Activated naive CD4-positive, alpha-beta T cell treated with anti-CD3 and anti-CD28 coated beads for 36 hours (primary cell): ENCODE measurements at regions of chr2 and their contacts with region 1.

Region 1: DNA sequence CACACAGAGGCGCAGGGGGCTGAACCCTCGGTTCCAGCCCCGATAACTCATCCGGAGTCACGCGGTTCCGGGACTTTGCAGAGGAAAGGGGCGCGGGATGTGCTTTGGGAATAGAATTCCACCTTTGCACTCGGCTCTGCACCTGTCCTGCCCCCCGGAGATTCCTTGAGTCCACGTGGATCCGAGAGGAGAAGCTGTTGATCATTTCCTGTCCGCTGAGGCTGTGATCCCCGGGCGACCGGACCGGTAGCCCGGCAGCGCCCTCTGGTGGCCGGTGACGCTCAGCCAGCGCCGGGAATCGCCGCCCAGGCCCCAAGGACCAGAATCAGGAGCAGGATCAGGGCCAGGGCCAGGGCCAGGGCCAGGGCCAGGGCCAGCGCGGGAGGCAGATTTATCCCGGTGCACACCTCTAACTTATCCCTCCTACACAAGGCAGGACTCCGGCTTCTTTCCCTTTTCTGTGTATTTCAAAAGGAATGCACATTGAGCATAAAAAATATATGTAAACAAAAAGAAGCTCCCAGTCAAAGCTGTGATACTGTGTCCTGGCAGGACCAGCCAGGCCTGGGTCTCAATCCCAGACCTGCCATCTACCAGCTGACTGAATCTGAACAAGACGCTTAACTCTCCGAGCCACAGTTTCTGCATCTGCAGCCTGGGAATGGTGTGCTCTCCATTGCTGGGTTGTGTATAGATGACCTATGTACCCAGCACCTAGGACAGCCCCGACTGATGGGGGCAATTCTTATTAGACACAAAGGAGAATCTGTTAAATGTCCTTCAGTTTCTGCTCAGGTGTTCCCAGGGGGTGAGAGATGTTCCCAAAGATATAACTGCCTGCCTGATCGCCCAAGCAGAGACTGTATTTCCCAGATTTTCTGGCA is 8.5 kb upstream of the SPATA3 start:
- DNase-seq: peak; percentile 80
- H3K4me3 Mint-ChIP-seq: peak overlapping the region; percentile 45
- H3K27ac Mint-ChIP-seq: no peak overlapping the region
- H3K4me1 Mint-ChIP-seq: peaks cover 22% of the 10 kb centered on the region
- H3K27me3 Mint-ChIP-seq: peaks cover 21% of the 10 kb centered on the region

Region 2: DNA sequence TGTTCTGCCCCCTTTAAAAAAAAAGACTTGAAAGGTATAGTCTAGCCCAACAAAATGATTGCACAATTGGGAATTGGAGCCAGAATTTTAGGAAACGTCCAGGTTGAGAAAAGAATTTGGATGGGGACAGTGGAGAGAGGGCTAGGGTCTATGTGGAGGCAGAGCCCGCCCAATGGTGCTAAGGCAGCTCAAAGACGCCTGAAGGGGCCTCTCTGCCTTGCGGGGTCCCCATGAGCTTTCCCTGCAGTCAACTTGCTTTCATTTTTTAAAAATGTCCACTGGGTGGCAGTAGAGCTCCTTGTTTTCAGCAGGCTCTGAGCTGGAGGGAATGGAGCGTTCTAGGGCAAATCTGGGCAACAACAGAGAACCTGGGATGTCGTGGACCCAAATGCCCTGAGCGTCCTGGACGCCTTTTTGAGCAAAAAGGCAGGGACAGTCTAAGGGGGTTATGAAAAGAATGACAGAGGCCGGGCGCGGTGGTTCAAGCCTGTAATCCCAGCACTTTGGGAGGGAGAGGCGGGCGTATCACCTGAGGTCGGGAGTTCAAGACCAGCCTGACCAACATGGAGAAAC is 162.9 kb before region 1 on chr2:
- CTCF ChIA-PET with region 1: interaction called, 48 read pairs
- intact Hi-C with region 1: loop called (anchors 1 kb)
- DNase-seq: peak; percentile 59
- H3K4me3 Mint-ChIP-seq: no peak overlapping the region
- H3K27ac Mint-ChIP-seq: no peak overlapping the region
- H3K4me1 Mint-ChIP-seq: peaks cover 5% of the 10 kb centered on the region
- H3K27me3 Mint-ChIP-seq: peaks cover 27% of the 10 kb centered on the region

Region 3: DNA sequence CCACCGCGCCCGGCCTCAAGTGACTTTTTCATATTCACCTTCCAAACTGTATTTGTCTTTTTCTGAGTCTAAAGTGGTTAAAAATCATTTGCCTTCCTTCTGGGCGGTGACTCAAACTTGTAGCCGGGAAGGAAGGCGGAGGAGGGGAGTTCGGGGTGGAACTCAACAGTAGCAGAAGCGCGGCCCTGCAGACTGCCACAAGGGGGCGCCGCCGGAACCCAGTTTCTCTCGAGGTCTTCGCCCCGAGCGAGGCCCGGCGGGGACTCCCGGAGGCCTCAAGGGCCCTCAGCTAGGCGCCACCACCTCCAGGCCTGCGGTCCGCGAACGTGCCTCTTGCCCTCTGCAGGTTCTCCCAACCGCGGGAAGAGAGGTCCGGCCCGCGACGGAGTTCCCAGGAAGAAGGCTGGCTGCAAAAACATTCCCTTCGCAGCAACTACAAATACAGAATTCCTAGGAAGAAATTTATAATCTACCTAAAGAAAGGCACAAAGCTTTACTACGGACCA is 139.4 kb before region 1 on chr2:
- CTCF ChIA-PET with region 1: interaction called, 47 read pairs
- intact Hi-C with region 1: loop called (anchors 1 kb)
- DNase-seq: peak; percentile 97
- H3K4me3 Mint-ChIP-seq: no peak overlapping the region
- H3K27ac Mint-ChIP-seq: peak overlapping the region; percentile 31
- H3K4me1 Mint-ChIP-seq: peaks cover 14% of the 10 kb centered on the region
- H3K27me3 Mint-ChIP-seq: peaks cover 13% of the 10 kb centered on the region

Region 4: DNA sequence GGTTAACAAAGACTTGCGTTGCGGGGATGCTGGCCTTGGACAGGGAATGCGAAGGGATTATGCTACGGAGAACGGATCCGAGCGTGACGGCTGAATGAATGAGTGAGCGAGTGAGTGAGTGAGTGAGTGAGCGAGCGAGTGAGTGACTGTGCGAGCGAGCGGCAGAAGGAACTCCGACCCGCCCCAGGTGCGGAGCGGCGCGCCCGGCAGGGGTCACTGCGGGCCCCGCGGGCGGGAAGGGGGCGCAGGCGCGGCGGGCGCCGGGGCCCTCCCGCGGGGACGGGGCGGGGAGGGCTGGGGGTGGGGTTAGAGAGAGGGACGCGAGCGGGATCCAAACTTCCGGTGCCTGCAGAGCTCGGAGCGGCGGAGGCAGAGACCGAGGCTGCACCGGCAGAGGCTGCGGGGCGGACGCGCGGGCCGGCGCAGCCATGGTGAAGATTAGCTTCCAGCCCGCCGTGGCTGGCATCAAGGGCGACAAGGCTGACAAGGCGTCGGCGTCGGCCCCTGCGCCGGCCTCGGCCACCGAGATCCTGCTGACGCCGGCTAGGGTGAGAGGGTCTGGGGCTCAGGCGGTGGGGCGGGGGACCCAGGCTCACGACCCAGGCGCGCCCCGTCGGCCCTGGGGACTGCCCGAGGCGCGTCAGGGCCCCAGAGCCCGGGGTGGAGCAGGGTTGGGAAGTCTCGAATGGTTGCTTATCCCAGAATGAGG is 122.6 kb before region 1 on chr2 and contains the start of gene ITM2C:
- CTCF ChIA-PET with region 1: interaction called, 7 read pairs
- intact Hi-C with region 1: loop called (anchors 1 kb)
- DNase-seq: peak; percentile 84
- H3K4me3 Mint-ChIP-seq: peak within 1 kb of the TSS; percentile 82
- H3K27ac Mint-ChIP-seq: peak within 1 kb of the TSS; percentile 3
- H3K4me1 Mint-ChIP-seq: peaks cover 45% of the 10 kb centered on the region
- H3K27me3 Mint-ChIP-seq: peaks cover 4% of the 10 kb centered on the region
- total RNA-seq, gene ITM2C: 13.0 to 13.6 TPM

Region 5: GRCh38 chr2:230924470-230925341 is 62.7 kb before region 1 on chr2 and contains the start of gene GPR55:
- CTCF ChIA-PET with region 1: interaction called, 19 read pairs
- intact Hi-C with region 1: loop called (anchors 1 kb)
- DNase-seq: peak; percentile 83
- H3K4me3 Mint-ChIP-seq: peak within 1 kb of the TSS; percentile 60
- H3K27ac Mint-ChIP-seq: peak within 1 kb of the TSS; percentile 91
- H3K4me1 Mint-ChIP-seq: peaks cover 63% of the 10 kb centered on the region
- H3K27me3 Mint-ChIP-seq: peaks cover 2% of the 10 kb centered on the region
- total RNA-seq, gene GPR55: 0.35 to 0.43 TPM

Region 6: DNA sequence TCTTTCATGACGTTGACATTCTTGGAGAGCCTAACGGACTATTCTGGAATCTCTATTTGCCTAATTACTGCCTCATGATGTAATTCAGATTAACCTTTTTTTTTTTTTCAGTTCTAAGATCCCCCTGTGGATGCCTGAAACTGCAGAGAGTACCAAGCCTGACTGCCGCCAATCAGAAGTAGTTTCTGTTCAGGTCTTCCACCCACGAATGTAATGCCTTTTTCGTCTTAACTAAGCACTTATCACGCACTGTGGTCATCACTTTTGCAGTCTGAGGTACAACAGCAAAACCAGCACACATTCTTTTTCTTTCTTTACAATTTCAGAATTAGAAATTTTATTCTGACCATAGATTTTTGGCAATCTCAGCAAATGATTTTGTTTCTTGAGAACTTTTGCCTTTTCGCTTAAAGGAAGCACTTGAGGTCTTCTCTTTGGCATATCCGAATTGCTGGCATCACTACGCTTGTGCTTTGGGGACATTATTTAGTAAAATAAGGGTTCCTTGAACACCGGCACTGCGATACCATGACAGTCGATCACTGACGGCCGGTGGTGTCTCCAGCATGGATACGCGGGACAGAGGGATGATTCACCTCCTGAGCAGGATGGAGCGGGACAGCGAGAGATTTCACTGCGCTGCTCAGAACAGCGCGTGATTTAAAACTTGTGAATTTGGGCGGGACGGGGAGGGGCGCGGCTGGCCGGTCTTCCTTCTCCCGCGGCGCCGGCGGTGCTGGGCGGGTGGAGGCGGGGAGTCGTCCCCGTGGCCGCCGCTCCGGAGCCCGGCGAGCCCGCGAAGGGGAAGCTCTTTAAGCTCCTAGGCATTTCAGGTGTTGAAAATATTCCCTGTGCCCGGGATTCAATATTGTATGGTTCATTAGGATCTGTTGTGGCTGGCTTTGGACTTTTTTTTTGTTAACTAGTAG is 30.3 kb before region 1 on chr2:
- CTCF ChIA-PET with region 1: interaction called, 5 read pairs
- intact Hi-C with region 1: loop called (anchors 2 kb)
- DNase-seq: peak; percentile 48
- H3K4me3 Mint-ChIP-seq: peak overlapping the region; percentile 67
- H3K27ac Mint-ChIP-seq: peak overlapping the region; percentile 48
- H3K4me1 Mint-ChIP-seq: peaks cover 22% of the 10 kb centered on the region
- H3K27me3 Mint-ChIP-seq: peaks cover 50% of the 10 kb centered on the region

Region 7: GRCh38 chr2:230974096-230974913 is 13.1 kb before region 1 on chr2:
- CTCF ChIA-PET with region 1: interaction called, 5 read pairs
- intact Hi-C with region 1: loop called (anchors 1 kb)
- DNase-seq: peak; percentile 87
- H3K4me3 Mint-ChIP-seq: no peak overlapping the region
- H3K27ac Mint-ChIP-seq: peak overlapping the region; percentile 73
- H3K4me1 Mint-ChIP-seq: peaks cover 21% of the 10 kb centered on the region
- H3K27me3 Mint-ChIP-seq: peaks cover 5% of the 10 kb centered on the region

Region 8: DNA sequence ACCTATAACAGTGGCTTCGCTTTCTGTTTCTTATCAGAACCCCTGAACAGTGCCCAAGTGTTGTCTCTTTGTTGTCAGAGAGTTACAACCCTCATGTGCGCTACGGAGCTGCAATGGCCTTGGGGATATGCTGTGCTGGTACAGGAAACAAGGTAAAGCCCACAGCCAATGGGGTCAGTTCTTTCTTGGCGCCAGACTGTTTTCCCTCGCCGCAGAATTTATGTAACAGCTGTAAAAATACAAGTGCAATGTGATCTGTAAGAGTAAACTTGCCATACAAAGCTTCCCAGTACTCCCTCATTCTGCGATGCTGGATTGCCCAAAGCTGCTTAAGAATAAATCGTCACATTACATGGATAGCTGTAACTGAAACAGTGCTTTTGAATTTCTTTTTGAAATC is 151.3 kb after region 1 on chr2:
- CTCF ChIA-PET with region 1: no interaction called
- intact Hi-C with region 1: no loop called
- DNase-seq: no peak
- H3K4me3 Mint-ChIP-seq: no peak overlapping the region
- H3K27ac Mint-ChIP-seq: no peak overlapping the region
- H3K4me1 Mint-ChIP-seq: no peaks in the 10 kb centered on the region
- H3K27me3 Mint-ChIP-seq: no peaks in the 10 kb centered on the region

Region 9: DNA sequence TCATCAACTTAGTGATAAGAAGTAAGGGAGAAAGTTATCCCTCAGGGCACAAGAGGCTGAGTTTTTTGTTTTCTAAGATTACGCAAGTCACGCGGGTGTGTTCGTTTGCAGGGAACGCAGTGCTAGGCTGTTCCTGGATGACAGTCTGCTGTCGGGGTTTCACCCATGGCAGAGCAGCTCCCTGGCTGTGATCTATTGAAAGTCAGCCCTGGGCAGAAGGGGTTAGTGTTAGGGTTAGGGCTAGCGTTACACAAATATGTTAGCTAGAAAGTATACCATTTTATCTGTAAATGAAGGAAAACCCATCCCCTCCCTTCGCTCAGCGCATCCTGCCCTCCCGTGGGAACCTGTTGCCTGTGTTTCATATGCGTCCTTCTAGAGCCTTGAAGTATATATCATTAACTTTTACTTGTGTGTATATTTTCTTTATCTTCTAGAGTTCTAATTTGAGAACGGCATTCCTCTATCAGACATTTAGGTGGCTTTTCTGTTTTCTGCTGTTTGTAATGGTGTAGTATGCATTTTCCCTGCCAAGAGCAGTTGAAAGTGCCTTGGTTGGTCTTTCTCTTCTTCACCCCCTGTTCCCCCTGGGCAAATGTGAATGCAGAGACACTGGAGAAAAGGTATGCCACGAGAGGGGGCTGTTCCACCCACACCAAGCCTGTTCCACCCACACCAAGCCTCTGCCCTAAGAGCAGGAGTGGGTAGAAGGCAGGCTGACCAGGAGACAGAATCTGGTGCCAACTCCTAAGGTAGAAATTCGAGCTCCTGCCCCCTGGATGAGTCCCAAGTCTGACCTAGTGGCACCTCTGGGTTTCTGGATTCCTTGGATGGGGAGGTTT is 258.1 kb after region 1 on chr2:
- CTCF ChIA-PET with region 1: no interaction called
- intact Hi-C with region 1: no loop called
- DNase-seq: no peak
- H3K4me3 Mint-ChIP-seq: no peak overlapping the region
- H3K27ac Mint-ChIP-seq: no peak overlapping the region
- H3K4me1 Mint-ChIP-seq: no peaks in the 10 kb centered on the region
- H3K27me3 Mint-ChIP-seq: no peaks in the 10 kb centered on the region